AG04449 (cell line): ENCODE measurements at regions of chr6 and their contacts with region 1.

Region 1: GRCh38 chr6:42901536-42901957 is 14.3 kb upstream of the PTCRA start:
- DNase-seq: no peak
- H3K4me3 ChIP-seq: no peak overlapping the region
- CTCF ChIP-seq: peak; percentile 66

Region 2: DNA sequence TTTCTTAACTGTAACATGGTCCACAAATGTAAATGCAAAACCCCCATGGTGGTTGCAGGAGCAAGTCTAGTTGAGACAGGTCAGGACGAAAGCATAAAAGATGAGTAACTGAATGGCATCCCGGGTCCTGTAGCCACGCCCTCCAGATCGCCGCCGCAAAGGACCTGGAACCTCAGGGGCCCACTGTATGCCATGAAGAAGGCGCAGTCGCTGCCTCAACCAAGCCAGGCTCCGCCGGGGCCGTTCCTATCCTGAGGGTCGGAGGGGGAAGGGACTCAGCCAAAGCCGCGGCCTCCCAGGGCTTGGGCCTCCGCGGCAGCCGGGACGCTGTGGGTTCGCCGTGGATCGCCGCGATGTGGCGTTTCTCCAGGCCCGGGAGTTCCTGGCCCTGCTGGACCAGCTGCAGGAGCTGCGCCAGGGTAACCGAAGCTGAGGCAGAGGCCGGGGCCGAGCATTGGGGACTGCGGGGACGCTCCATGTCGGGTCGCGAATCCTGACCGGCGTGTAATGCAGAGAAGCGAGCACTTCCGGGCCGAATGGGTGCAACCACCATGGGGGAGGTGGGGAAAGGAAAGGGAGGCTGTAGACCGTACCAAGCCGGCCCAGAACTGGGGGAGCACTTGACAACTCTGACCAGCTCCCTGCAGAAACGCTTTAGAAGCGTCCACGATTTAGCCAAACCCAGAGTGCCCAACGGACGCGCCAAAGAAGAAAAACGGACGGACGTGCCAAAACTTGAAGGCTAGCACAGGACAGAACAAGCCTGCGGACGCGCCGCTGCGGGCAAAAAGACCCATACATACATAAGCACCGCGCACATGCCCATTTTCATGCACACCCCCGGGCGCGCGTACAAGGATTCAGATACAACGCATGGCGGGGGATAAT is 11.0 kb before region 1 on chr6:
- CTCF ChIA-PET with region 1: interaction called, 37 read pairs
- POLR2A ChIA-PET with region 1: no interaction called
- DNase-seq: peak; percentile 90
- H3K4me3 ChIP-seq: peak overlapping the region; percentile 99
- CTCF ChIP-seq: no peak

Region 3: DNA sequence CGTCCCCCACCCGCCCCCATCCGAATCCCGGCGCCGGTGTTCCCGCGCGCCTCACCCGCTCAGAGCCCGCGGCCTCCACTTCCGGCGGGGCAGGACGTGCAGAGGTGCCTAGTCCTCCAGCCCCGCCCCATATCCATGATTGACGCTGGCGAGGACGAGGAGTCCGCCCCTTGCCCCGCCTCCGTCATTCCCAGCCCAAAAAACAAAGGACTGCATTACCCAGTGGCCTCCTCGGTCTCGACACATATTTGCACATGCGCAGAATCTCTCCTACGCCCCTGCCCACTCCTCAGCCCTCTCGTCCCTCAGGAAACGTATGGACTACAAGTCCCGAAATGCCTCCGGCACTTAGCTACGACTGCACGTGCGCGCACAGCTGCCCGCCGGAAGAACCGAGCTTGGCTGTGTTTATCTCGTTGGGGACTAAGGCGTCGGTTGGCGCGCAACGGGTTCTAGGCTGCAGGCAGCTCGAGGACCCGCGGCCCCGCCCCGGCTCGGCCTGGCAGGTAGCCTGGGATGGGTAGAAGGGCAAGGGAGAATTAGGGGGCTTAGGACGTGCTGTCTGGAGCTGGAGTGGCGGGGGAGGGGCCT is 112.4 kb after region 1 on chr6 and contains the starts of genes KLHDC3 and MEA1:
- CTCF ChIA-PET with region 1: interaction called, 38 read pairs
- POLR2A ChIA-PET with region 1: interaction called, 3 read pairs
- DNase-seq: peak; percentile 99
- H3K4me3 ChIP-seq: peak within 1 kb of the TSS; percentile 98
- CTCF ChIP-seq: no peak

Region 4: GRCh38 chr6:43021270-43022047 is 119.9 kb after region 1 on chr6 and contains the start of gene RRP36:
- CTCF ChIA-PET with region 1: interaction called, 38 read pairs
- POLR2A ChIA-PET with region 1: no interaction called
- DNase-seq: no peak
- H3K4me3 ChIP-seq: peak within 1 kb of the TSS; percentile 97
- CTCF ChIP-seq: no peak

Region 5: DNA sequence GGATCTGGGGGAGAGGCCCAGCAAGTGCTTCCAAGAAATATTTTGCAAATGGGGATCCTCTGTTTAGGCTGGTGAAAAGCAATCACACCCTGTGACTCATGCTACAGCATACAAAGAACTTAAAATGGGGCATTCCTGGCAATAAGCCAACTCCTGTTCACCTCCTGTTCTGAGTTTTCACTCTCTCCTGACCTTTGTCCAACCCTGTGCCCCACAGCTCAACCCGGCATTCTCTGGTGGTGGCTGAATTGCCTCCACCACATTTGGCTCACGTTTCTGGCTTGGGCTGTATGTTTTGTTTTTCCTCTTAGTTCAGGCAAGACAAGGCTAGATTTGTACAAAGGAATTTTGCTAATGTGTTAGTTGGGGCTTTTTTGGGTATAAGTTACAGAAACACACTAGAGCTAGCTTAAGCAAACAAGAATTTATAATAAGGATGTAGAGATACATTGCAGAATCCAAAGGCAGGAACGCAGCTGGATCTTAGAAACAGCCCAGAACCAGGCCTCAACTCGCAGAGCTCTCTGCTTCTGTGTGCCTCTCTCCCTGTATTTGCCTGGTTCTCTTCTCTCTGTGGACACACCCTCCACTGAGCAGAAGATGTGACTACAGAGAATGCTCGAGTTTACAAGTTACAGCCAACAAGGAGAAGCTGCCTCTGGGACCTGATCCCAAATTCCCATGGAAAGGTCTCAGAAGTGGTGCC is 535.2 kb after region 1 on chr6:
- CTCF ChIA-PET with region 1: no interaction called
- POLR2A ChIA-PET with region 1: no interaction called
- DNase-seq: peak; percentile 23
- H3K4me3 ChIP-seq: no peak overlapping the region
- CTCF ChIP-seq: no peak